Activated B cell treated with CpG ODN at 0.5 μM for 24 hours (primary cell): ENCODE measurements at regions of chr16 and their contacts with region 1.

Region 1: GRCh38 chr16:28277537-28278388 is 14.6 kb upstream of the SBK1 start:
- DNase-seq: peak; percentile 78
- ATAC-seq: peak; percentile 97
- H3K4me3 Mint-ChIP-seq: peak overlapping the region; percentile 55
- H3K27ac Mint-ChIP-seq: no peak overlapping the region
- H3K4me1 Mint-ChIP-seq: peaks cover 8% of the 10 kb centered on the region
- H3K27me3 Mint-ChIP-seq: peaks cover 33% of the 10 kb centered on the region
- CTCF ChIP-seq: peak; percentile 87

Region 2: GRCh38 chr16:27779641-27780164 is 498.1 kb before region 1 on chr16:
- CTCF ChIA-PET with region 1: no interaction called
- POLR2A ChIA-PET with region 1: no interaction called
- intact Hi-C with region 1: no loop called
- DNase-seq: no peak
- ATAC-seq: no peak
- H3K4me3 Mint-ChIP-seq: no peak overlapping the region
- H3K27ac Mint-ChIP-seq: no peak overlapping the region
- H3K4me1 Mint-ChIP-seq: no peaks in the 10 kb centered on the region
- H3K27me3 Mint-ChIP-seq: no peaks in the 10 kb centered on the region
- CTCF ChIP-seq: no peak

Region 3: GRCh38 chr16:28291873-28292660 is 14.3 kb after region 1 on chr16 and contains the start of gene SBK1:
- CTCF ChIA-PET with region 1: interaction called, 3 read pairs
- POLR2A ChIA-PET with region 1: interaction called, 3 read pairs
- intact Hi-C with region 1: loop called (anchors 2 kb)
- DNase-seq: peak; percentile 87
- ATAC-seq: peak; percentile 97
- H3K4me3 Mint-ChIP-seq: peak within 1 kb of the TSS; percentile 82
- H3K27ac Mint-ChIP-seq: peak within 1 kb of the TSS; percentile 76
- H3K4me1 Mint-ChIP-seq: peaks cover 12% of the 10 kb centered on the region
- H3K27me3 Mint-ChIP-seq: peaks cover 11% of the 10 kb centered on the region
- CTCF ChIP-seq: no peak
- total RNA-seq, gene SBK1: 0.39 and 0.58 TPM in 2 replicates

Region 4: DNA sequence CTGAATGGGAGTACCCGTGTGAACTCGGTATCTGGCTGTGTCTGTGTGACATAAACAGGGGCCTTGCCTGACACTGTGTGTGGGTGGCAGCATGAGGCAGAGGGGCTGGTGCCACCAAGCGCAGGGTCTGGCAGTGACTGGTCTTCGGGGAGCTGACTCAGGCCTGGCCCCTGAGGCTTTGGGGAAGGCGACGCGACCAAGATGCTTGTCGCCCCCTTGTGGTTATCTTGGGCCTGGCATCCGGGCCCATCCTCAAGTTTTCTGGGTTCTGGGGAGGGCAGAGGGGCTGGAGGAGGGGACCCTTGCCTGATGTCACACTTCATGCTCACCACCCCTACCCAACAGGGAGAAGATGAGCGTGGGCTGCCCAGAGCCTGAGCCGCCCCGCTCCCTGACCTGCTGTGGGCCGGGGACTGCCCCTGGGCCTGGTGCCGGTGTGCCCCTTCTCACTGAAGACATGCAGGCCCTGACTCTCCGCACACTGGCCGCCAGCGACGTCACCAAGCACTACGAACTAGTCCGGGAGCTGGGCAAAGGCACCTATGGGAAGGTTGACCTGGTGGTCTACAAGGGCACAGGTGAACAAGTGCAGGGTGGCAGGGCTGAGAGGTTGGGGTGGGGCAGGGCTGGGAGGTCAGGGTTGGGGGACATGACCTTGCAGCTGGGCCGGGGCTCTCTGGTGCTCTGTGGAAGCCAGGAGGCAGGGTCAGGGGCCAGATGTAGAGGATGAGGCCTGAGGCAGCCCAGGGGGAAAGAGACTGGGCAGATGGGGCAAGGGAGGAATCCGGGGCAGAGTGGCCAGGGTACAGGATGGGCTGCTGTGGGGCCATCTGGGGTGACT is 39.5 kb after region 1 on chr16:
- CTCF ChIA-PET with region 1: interaction called, 40 read pairs
- POLR2A ChIA-PET with region 1: no interaction called
- intact Hi-C with region 1: loop called (anchors 1 kb)
- DNase-seq: peak; percentile 64
- ATAC-seq: peak; percentile 81
- H3K4me3 Mint-ChIP-seq: no peak overlapping the region
- H3K27ac Mint-ChIP-seq: peak overlapping the region; percentile 41
- H3K4me1 Mint-ChIP-seq: peaks cover 3% of the 10 kb centered on the region
- H3K27me3 Mint-ChIP-seq: no peaks in the 10 kb centered on the region
- CTCF ChIP-seq: peak; percentile 42